Activated naive CD4-positive, alpha-beta T cell treated with anti-CD3 and anti-CD28 coated beads for 36 hours (primary cell): ENCODE measurements at regions of chr3 and their contacts with region 1.

Region 1: GRCh38 chr3:20225769-20226168 is 39.8 kb upstream of the SGO1 start:
- DNase-seq: no peak
- H3K4me3 Mint-ChIP-seq: no peak overlapping the region
- H3K27ac Mint-ChIP-seq: no peak overlapping the region
- H3K4me1 Mint-ChIP-seq: no peaks in the 10 kb centered on the region
- H3K27me3 Mint-ChIP-seq: no peaks in the 10 kb centered on the region

Region 2: DNA sequence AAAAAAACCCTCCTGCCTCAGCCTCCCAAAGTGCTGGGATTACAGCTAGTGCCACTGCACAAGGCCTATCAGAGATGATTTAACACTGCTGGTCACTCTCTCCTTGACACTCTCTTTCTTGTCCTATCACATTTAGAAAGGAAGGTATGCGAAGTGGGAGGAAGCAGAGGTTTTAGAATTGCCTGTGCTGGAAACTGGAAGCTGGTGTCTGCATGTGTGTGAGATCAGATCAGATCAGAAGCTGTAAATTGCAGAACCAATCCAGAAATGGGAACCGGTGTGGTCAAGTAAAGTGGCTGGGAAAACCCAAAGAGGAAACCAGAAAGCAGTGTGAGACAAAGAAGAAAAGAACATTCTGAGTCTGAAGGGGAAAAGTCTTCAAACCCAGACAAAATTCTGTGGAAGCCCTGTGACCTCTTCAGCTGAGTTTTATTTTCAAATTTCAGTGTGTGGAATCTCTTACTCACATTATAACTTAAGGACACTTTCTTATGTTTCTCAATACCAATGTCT is 294.5 kb before region 1 on chr3:
- CTCF ChIA-PET with region 1: no interaction called
- intact Hi-C with region 1: no loop called
- DNase-seq: peak; percentile 62
- H3K4me3 Mint-ChIP-seq: no peak overlapping the region
- H3K27ac Mint-ChIP-seq: no peak overlapping the region
- H3K4me1 Mint-ChIP-seq: peaks cover 23% of the 10 kb centered on the region
- H3K27me3 Mint-ChIP-seq: peaks cover 10% of the 10 kb centered on the region

Region 3: GRCh38 chr3:20125897-20126296 is 99.9 kb before region 1 on chr3:
- CTCF ChIA-PET with region 1: no interaction called
- intact Hi-C with region 1: no loop called
- DNase-seq: no peak
- H3K4me3 Mint-ChIP-seq: no peak overlapping the region
- H3K27ac Mint-ChIP-seq: no peak overlapping the region
- H3K4me1 Mint-ChIP-seq: no peaks in the 10 kb centered on the region
- H3K27me3 Mint-ChIP-seq: no peaks in the 10 kb centered on the region

Region 4: DNA sequence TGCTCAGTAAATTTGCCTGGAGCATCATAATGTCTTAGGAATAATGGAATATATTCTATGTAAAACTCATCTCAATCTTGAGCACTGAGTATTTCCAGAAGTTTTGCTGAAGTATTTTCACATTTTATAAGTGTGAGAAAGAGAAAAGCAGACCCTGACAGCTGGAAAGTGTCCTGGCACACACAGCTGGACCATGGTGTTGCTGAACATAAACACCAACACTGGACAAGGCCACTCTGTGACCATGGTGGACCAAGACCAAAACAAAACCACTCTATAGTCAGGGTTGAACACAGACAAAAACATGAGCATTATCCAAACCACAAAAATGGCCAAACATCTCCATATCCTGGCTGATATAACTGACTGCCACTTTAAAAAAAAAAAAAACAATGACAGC is 24.6 kb before region 1 on chr3:
- CTCF ChIA-PET with region 1: no interaction called
- intact Hi-C with region 1: no loop called
- DNase-seq: no peak
- H3K4me3 Mint-ChIP-seq: no peak overlapping the region
- H3K27ac Mint-ChIP-seq: no peak overlapping the region
- H3K4me1 Mint-ChIP-seq: peaks cover 4% of the 10 kb centered on the region
- H3K27me3 Mint-ChIP-seq: no peaks in the 10 kb centered on the region

Region 5: GRCh38 chr3:20511863-20512505 is 286.2 kb after region 1 on chr3:
- CTCF ChIA-PET with region 1: no interaction called
- intact Hi-C with region 1: no loop called
- DNase-seq: no peak
- H3K4me3 Mint-ChIP-seq: no peak overlapping the region
- H3K27ac Mint-ChIP-seq: no peak overlapping the region
- H3K4me1 Mint-ChIP-seq: no peaks in the 10 kb centered on the region
- H3K27me3 Mint-ChIP-seq: no peaks in the 10 kb centered on the region

Region 6: GRCh38 chr3:21216598-21216997 is 990.8 kb after region 1 on chr3:
- CTCF ChIA-PET with region 1: no interaction called
- intact Hi-C with region 1: loop called (anchors 5 kb)
- DNase-seq: no peak
- H3K4me3 Mint-ChIP-seq: no peak overlapping the region
- H3K27ac Mint-ChIP-seq: no peak overlapping the region
- H3K4me1 Mint-ChIP-seq: no peaks in the 10 kb centered on the region
- H3K27me3 Mint-ChIP-seq: no peaks in the 10 kb centered on the region

Region 7: DNA sequence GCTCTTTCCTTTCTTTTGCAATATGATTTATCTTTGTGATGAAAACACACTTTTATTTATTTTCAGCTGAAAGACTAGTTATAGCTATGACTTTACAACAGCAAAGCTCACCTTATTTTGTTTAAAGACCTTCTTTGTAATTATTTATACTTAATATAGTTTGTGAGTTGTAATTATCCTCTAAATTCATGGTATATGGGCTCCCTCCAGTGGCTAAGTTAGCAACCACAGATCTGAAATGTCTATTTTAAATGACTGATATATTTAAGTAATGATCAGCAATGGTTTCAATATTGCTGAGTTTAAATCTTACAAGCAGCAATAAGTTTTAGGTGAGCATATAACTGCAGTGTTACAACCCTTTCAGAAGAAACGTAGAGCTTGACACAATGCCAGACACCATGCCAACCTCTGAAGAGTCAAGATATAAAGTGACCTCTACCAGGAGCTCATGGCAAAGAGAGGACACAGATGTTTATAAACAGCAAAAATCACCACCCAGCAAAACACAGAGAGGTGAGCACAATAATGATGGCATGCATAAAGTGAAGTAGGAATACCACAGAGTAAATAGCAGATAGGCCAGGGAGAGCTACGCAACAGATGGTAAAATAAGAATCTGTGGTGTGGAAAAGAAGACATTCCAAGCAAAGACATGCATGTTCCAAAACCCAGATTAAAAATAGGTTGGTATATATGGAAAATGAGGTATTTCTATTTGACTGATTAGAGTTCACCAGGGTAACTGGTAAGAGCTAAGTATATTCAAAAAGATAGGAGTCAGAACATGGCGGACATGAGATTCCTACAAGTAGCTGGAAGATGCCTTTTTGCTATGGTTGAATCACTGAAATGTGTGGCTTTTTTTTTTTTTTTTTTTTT is 1668.9 kb after region 1 on chr3:
- CTCF ChIA-PET with region 1: no interaction called
- intact Hi-C with region 1: loop called (anchors 10 kb)
- DNase-seq: no peak
- H3K4me3 Mint-ChIP-seq: no peak overlapping the region
- H3K27ac Mint-ChIP-seq: no peak overlapping the region
- H3K4me1 Mint-ChIP-seq: no peaks in the 10 kb centered on the region
- H3K27me3 Mint-ChIP-seq: no peaks in the 10 kb centered on the region